ENCODE measurements at regions of chr1 and their contacts with region 1.

Region 1: GRCh38 chr1:35641233-35641866 is at the start of gene PSMB2:
- DNase-seq: peak; percentile 93 to 97
- ATAC-seq: peak; percentile 97
- H3K4me3 ChIP-seq: peak within 1 kb of the TSS; percentile 82 to 98 (median 88)
- H3K27ac ChIP-seq: peak within 1 kb of the TSS; percentile 93 to 98 (median 95)
- H3K4me1 ChIP-seq: peaks cover 40 to 43% of the 10 kb centered on the region in 2 donors
- H3K27me3 ChIP-seq: no peaks in the 10 kb centered on the region
- CTCF ChIP-seq: peak in 1 of 5 experiments; percentile 11
- POLR2A ChIP-seq: peak; percentile 74 to 90
- total RNA-seq, gene PSMB2: 65.2 to 119 (median 89.9) TPM

Region 2: GRCh38 chr1:33908324-33908956 is 1732.9 kb before region 1 on chr1:
- in situ Hi-C with region 1: no loop called
- intact Hi-C with region 1: no loop called
- DNase-seq: no peak
- ATAC-seq: no peak
- H3K4me3 ChIP-seq: no peak overlapping the region
- H3K27ac ChIP-seq: no peak overlapping the region
- H3K4me1 ChIP-seq: no peaks in the 10 kb centered on the region
- H3K27me3 ChIP-seq: no peaks in the 10 kb centered on the region
- CTCF ChIP-seq: no peak
- POLR2A ChIP-seq: no peak

Region 3: GRCh38 chr1:35557292-35558063 is 83.9 kb before region 1 on chr1 and contains the starts of genes KIAA0319L and NCDN:
- in situ Hi-C with region 1: no loop called
- intact Hi-C with region 1: loop called (anchors 2 kb)
- DNase-seq: peak; percentile 97
- ATAC-seq: peak; percentile 94 to 97
- H3K4me3 ChIP-seq: peak within 1 kb of the TSS; percentile 84 to 99 (median 98)
- H3K27ac ChIP-seq: peak within 1 kb of the TSS; percentile 91 to 100 (median 99)
- H3K4me1 ChIP-seq: peaks cover 45 to 69% of the 10 kb centered on the region in 2 donors
- H3K27me3 ChIP-seq: no peaks in the 10 kb centered on the region
- CTCF ChIP-seq: peak in 1 of 5 experiments; percentile 12
- POLR2A ChIP-seq: peak; percentile 68 to 81
- total RNA-seq, gene KIAA0319L: 44.4 to 85.0 (median 69.2) TPM
- total RNA-seq, gene NCDN: 8.7 to 16.8 (median 14.0) TPM

Region 4: GRCh38 chr1:35568975-35569395 is 72.4 kb before region 1 on chr1:
- in situ Hi-C with region 1: no loop called
- intact Hi-C with region 1: no loop called
- DNase-seq: peak in 1 of 2 donors; percentile 34
- ATAC-seq: peak; percentile 60 to 71
- H3K4me3 ChIP-seq: no peak overlapping the region
- H3K27ac ChIP-seq: no peak overlapping the region
- H3K4me1 ChIP-seq: peaks cover 0 to 3% of the 10 kb centered on the region in 2 donors
- H3K27me3 ChIP-seq: peaks cover 29 to 47% (median 32%) of the 10 kb centered on the region in 3 donors
- CTCF ChIP-seq: peak; percentile 58 to 82 (median 80)
- POLR2A ChIP-seq: no peak

Region 5: GRCh38 chr1:35715568-35716002 is 74.2 kb after region 1 on chr1:
- in situ Hi-C with region 1: loop called in 2 of 4 experiments (anchors 5 to 10 kb)
- intact Hi-C with region 1: loop called (anchors 2 kb)
- DNase-seq: peak in 1 of 2 donors; percentile 48
- ATAC-seq: peak in 1 of 2 donors; percentile 39
- H3K4me3 ChIP-seq: no peak overlapping the region
- H3K27ac ChIP-seq: no peak overlapping the region
- H3K4me1 ChIP-seq: peaks cover 21 to 22% of the 10 kb centered on the region in 2 donors
- H3K27me3 ChIP-seq: no peaks in the 10 kb centered on the region
- CTCF ChIP-seq: peak; percentile 33 to 74 (median 65)
- POLR2A ChIP-seq: no peak

Region 6: DNA sequence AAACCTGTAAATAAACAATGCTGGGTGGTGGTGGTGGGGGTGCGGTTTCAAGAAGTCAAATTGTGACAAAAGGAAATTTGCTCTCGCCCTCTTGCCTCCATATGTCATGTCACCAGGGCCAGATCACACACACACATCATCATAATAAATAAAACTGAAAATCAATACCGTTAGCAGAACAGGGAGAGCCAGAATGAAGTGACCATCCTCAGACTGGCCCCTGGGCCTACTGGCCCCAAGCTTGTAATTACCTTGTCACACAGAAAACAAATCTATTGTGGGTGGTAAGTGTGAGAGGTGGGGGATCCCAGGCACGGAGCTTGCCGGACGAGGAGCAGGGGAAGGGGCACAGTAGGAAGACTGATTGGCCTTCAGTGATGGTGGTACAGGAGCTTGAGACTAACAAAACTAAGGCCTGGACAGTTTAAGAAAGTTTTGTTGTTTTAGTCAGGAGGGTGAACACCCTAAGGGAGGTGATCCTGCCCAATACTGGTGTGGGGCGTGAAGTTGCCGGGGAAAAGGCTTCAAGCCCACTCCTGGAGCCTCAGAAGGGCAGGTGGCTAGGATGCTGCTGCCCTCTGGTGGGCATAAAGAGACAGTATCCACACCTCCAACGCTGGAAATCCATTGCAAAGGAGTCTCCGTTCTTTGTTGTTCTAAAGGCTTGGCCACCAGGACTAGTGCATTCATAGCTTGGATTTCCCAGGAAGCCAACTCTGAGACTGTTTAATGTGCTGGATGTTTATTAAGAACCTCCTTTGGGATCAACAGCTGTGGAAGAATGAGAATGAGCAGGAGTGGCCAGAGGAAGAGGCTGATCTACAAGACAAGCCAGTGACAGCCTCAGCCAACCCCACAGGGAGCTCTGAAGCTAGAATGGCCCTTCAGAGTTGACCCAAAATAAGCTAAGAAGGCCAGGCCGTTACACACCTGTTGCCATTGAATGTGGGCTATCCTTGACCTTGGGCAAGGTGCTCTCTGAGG is 85.4 kb after region 1 on chr1:
- in situ Hi-C with region 1: loop called in 1 of 4 experiments (anchors 10 kb)
- intact Hi-C with region 1: no loop called
- DNase-seq: peak in 1 of 2 donors; percentile 31
- ATAC-seq: peak; percentile 79 to 98
- H3K4me3 ChIP-seq: no peak overlapping the region
- H3K27ac ChIP-seq: no peak overlapping the region
- H3K4me1 ChIP-seq: no peaks in the 10 kb centered on the region
- H3K27me3 ChIP-seq: no peaks in the 10 kb centered on the region
- CTCF ChIP-seq: peak; percentile 67 to 90 (median 73)
- POLR2A ChIP-seq: no peak

Region 7: GRCh38 chr1:35737120-35737519 is 95.8 kb after region 1 on chr1:
- in situ Hi-C with region 1: no loop called
- intact Hi-C with region 1: no loop called
- DNase-seq: no peak
- ATAC-seq: no peak
- H3K4me3 ChIP-seq: no peak overlapping the region
- H3K27ac ChIP-seq: no peak overlapping the region
- H3K4me1 ChIP-seq: no peaks in the 10 kb centered on the region
- H3K27me3 ChIP-seq: no peaks in the 10 kb centered on the region
- CTCF ChIP-seq: no peak
- POLR2A ChIP-seq: no peak

Region 8: GRCh38 chr1:35753626-35754260 is 112.4 kb after region 1 on chr1:
- in situ Hi-C with region 1: no loop called
- intact Hi-C with region 1: no loop called
- DNase-seq: no peak
- ATAC-seq: no peak
- H3K4me3 ChIP-seq: no peak overlapping the region
- H3K27ac ChIP-seq: no peak overlapping the region
- H3K4me1 ChIP-seq: no peaks in the 10 kb centered on the region
- H3K27me3 ChIP-seq: no peaks in the 10 kb centered on the region
- CTCF ChIP-seq: no peak
- POLR2A ChIP-seq: no peak

Region 9: GRCh38 chr1:35930593-35931445 is 289.5 kb after region 1 on chr1 and contains the start of gene AGO3:
- in situ Hi-C with region 1: no loop called
- intact Hi-C with region 1: loop called (anchors 1 kb)
- DNase-seq: peak; percentile 66 to 78
- ATAC-seq: peak; percentile 89 to 91
- H3K4me3 ChIP-seq: peak within 1 kb of the TSS; percentile 71 to 85 (median 81)
- H3K27ac ChIP-seq: peak within 1 kb of the TSS; percentile 90 to 97 (median 96)
- H3K4me1 ChIP-seq: peaks cover 16 to 24% of the 10 kb centered on the region in 2 donors
- H3K27me3 ChIP-seq: no peaks in the 10 kb centered on the region
- CTCF ChIP-seq: peak in 1 of 5 experiments; percentile 9
- POLR2A ChIP-seq: peak; percentile 85
- total RNA-seq, gene AGO3: 12.8 to 18.8 (median 13.6) TPM